ENCODE measurements at regions of chr3 and their contacts with region 1.

Region 1: GRCh38 chr3:15815696-15816095 is 17.9 kb upstream of the ANKRD28 start:
- DNase-seq: no peak
- H3K4me3 Mint-ChIP-seq: no peak overlapping the region
- H3K27ac Mint-ChIP-seq: no peak overlapping the region
- H3K4me1 Mint-ChIP-seq: peaks cover 42% of the 10 kb centered on the region
- H3K27me3 Mint-ChIP-seq: no peaks in the 10 kb centered on the region

Region 2: GRCh38 chr3:15427182-15427880 is 388.4 kb before region 1 on chr3 and contains the starts of genes EAF1 and METTL6:
- CTCF ChIA-PET with region 1: no interaction called
- intact Hi-C with region 1: loop called (anchors 5 kb)
- DNase-seq: peak; percentile 92
- H3K4me3 Mint-ChIP-seq: peak within 1 kb of the TSS; percentile 90
- H3K27ac Mint-ChIP-seq: peak within 1 kb of the TSS; percentile 91
- H3K4me1 Mint-ChIP-seq: peaks cover 41% of the 10 kb centered on the region
- H3K27me3 Mint-ChIP-seq: no peaks in the 10 kb centered on the region
- total RNA-seq, gene EAF1: 19.5 to 20.6 TPM
- total RNA-seq, gene METTL6: 12.5 to 14.0 TPM

Region 3: DNA sequence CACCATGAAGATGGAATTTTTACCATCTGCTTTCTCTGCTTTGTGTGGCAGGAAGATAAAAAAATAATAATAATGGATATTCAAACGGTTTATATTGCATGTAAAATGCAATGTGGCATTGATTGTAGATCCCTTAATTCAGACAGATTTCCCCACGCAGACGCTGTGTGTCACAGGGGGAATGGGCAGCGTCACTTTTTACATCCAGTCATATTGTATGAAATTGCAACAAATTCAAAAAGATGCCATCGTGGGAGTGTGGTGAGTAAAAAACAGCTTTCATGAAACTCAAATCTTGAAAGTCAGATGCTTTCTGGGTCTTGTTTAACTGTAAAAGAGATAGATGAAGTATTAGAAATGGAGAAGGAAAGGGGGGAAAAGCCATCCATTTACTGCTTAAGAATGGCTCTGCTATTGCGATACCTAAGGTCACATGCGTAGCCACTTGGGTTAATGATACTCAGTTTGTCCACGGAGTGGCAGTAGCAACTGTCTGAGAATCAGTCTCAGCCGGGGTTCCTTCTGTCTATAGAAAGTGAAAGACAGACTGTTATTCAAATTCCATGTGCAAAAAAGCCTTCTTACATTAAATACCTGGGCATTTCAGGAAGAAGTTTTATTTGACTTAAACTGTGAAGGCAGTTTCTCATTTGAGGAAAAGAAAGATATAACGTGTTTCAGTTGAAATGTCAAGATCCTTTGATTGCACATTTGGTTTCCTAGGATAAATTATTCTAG is 185.7 kb before region 1 on chr3:
- CTCF ChIA-PET with region 1: interaction called, 23 read pairs
- intact Hi-C with region 1: loop called (anchors 1 kb)
- DNase-seq: peak; percentile 84
- H3K4me3 Mint-ChIP-seq: peak overlapping the region; percentile 37
- H3K27ac Mint-ChIP-seq: peak overlapping the region; percentile 28
- H3K4me1 Mint-ChIP-seq: peaks cover 46% of the 10 kb centered on the region
- H3K27me3 Mint-ChIP-seq: no peaks in the 10 kb centered on the region

Region 4: DNA sequence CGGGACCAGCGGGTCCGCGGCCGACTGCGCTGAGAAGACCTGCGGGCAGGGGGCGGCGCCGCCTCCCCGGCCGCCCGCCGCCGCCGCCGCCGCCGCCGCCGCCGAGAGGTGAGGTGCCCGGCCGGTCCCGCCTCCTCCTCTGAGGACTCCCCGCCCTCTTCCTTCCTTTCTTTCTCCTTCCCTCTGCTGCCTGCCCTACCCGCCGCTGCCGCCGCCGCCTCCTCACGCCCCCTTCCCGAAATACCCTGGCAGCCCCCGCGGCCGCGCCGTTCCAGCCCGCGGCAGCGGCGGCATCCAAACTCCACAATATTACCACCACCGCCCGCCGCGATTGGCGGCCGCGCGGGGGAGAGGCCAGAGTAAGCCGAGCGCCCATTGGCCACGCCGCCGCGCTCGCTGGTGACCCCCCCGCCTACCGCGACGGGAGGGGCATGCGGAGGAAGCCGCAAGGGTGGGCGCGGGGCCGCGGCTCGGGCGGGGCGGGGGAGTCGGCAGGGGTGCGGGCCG is 43.9 kb after region 1 on chr3:
- CTCF ChIA-PET with region 1: no interaction called
- intact Hi-C with region 1: loop called (anchors 2 kb)
- DNase-seq: peak; percentile 75
- H3K4me3 Mint-ChIP-seq: peak overlapping the region; percentile 98
- H3K27ac Mint-ChIP-seq: peak overlapping the region; percentile 91
- H3K4me1 Mint-ChIP-seq: peaks cover 40% of the 10 kb centered on the region
- H3K27me3 Mint-ChIP-seq: no peaks in the 10 kb centered on the region

Region 5: DNA sequence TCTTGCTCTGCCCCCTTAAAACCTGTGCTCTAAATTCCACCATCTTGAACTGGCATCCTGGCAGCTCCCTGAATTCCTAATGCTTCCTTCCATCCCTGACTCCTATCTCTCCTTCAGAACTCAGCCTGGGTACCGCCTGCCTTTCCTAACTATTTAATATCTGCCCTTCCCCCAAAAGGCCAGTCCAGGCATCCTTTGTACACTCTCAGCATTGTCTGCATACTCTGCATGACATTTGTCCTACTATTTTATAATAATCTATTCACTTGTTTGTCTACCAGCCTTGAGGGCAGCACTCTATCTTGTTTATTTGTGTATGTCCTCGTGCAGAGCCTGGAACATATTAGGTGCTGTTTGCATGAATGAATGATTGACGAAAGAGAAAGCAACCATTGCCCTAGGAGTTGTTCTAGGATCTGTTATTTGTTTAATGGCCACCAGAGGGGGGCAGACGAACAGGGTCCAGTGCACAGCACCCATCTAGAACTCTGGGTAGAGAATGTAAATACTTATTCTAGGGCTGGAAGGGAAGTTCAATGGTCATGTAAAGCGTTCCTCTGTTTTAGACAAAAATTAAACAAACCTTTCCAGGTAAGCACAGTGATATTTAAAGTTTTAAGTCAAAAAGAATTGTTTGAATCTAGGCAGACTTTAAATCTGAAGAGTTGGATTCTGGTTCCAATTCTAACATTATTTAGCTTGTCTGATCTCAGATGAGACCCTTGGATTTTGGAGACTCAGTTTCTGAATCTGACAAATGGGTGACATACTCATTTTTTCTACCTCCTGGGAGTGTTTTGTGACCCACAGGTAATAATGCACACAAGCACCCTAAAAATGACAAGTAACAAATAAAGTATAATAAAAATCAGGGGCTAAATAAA is 233.0 kb after region 1 on chr3:
- CTCF ChIA-PET with region 1: no interaction called
- intact Hi-C with region 1: loop called (anchors 5 kb)
- DNase-seq: peak; percentile 68
- H3K4me3 Mint-ChIP-seq: no peak overlapping the region
- H3K27ac Mint-ChIP-seq: no peak overlapping the region
- H3K4me1 Mint-ChIP-seq: peaks cover 10% of the 10 kb centered on the region
- H3K27me3 Mint-ChIP-seq: no peaks in the 10 kb centered on the region

Region 6: DNA sequence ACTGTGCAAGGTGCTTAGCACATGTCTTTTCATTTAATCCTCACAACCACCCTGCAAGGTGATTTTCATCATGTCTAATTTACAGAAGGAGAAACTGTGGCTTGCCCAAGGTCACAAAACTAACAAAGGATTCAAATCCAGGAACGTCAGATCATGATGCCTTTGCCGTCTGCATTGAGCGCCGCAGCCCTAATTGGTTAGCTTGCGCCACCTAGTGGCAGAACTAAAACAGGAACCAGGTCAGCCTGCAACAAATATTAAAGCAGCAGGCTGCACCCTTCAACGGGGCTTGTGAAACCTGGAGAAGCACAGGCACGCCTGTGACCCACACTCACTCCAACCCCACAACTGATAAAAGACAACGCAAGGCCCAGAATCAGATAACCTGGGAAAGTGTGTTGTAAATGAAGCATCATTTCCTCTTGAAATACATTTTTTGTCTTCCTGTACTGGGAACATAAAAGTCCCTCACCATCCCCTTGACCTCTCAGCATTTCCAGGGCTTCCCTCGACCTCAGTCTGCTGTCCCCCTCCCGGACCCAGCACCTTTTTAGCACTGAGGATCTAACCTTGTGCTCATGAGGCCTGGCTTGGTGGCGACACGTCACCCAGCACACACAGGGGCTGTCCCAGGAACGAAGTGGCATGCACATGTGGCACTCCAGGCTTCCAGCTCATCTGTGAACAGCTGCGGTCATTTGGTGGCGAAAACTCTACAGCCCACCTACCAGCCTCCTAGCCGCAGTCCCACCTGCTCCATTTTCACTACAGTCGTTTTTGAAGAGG is 431.8 kb after region 1 on chr3:
- CTCF ChIA-PET with region 1: no interaction called
- intact Hi-C with region 1: loop called (anchors 1 kb)
- DNase-seq: peak; percentile 89
- H3K4me3 Mint-ChIP-seq: no peak overlapping the region
- H3K27ac Mint-ChIP-seq: no peak overlapping the region
- H3K4me1 Mint-ChIP-seq: peaks cover 4% of the 10 kb centered on the region
- H3K27me3 Mint-ChIP-seq: no peaks in the 10 kb centered on the region